Dorsolateral prefrontal cortex (tissue), 120 donors: ENCODE measurements at regions of chr3 and their contacts with region 1.

Region 1: DNA sequence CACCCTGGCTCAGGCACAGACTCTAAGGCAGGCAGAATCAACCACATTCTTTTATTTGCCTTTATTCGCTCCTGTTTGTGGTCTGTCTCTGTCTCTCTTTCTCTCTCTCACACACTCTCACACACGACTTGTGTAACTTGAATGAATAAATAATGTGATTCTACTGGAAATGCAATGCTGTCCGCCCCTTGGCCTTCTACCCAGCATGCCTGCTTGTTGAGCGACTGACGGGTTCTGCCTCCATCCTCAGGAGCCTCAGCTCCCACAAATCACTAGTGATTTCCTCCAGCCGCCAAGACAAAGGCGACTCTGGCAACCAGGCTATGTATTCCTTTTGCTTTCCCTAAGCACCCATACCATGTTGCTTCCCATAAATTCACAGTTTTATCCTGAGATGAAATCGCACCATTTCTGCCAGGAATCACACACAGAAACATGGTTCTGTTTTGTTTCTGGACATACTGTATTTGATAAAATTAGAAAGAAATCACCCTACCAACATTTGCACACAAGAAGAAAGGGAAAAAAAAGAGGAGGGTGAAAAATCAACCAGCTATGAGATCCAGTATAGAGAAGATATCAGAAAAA is 460.8 kb downstream of the MAGI1 start:
- DNase-seq: peak in 5 of 10 donors; percentile 16 to 43 (median 40)
- H3K4me3 ChIP-seq: peak overlapping the region in 4 of 59 donors; percentile 2 to 19 (median 15)
- H3K27ac ChIP-seq: peak overlapping the region in 27 of 59 donors; percentile 1 to 66 (median 28)
- H3K27me3 ChIP-seq: no peaks in the 10 kb centered on the region
- CTCF ChIP-seq: no peak

Region 2: DNA sequence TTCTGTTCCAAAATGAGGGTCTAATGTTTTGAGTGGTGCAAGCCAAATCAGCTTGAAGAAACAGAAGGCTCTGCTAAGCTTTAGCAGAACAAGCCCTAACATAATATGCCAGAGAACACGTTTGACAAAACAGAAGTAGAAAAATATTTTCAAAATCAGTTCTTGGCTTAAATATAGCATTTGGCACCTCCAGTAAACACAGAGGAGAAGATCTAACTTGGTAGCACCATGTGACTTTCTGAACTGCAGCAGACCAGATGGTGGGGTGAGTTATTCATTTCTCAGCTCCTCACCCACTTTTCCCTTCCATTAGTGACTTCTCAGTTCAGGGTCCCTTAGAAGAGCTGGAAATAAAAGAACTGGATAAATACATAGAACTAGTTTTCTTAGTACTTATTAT is 64.9 kb after region 1 on chr3:
- intact Hi-C with region 1: loop called in 1 of 2 experiments (anchors 2 kb)
- DNase-seq: peak in 2 of 10 donors; percentile 18 to 26
- H3K4me3 ChIP-seq: no peak overlapping the region
- H3K27ac ChIP-seq: peak overlapping the region in 32 of 59 donors; percentile 8 to 76 (median 48)
- H3K27me3 ChIP-seq: no peaks in the 10 kb centered on the region
- CTCF ChIP-seq: no peak